ENCODE measurements at regions of chr22 and their contacts with region 1.

Region 1: DNA sequence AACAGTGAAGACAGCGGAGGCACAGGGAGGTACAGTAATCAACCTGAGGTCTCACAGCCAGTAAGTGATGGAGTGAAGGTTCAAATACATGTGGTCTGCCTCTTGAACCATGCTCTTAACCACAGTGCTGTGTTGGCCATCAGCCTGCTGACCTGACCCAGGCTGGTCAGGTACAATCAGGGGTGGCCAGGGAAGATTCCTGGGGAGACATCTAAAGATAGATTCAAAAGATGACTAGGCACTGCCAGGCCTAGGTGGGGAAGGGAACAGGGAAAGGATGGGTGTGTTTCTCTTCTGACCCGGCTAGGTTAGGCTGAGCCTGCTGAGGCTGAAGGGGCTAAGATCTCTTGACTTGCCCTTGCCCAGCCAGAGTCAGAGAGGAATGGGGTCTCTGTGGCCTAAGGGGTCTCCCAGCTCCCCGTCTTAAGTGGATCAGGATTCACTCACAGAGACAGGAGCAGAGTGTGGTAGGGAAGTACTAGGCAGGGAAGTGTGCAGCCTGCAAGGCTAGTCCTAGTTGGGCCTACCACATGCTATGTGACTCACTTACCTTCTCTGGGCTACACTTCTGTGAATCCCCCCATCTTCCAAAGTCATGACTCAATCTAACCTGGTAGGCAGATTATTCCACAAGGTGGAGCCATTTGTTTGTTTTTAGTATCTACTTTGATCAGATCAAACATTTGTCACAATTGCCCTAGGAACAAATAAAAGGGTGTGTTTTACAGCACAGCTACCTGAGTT is 10.4 kb upstream of the SREBF2 start:
- DNase-seq: peak; percentile 64
- H3K4me3 ChIP-seq: no peak overlapping the region
- H3K27ac ChIP-seq: peak overlapping the region; percentile 74
- H3K4me1 ChIP-seq: peaks cover 14% of the 10 kb centered on the region
- H3K27me3 ChIP-seq: no peaks in the 10 kb centered on the region
- CTCF ChIP-seq: peak; percentile 56

Region 2: DNA sequence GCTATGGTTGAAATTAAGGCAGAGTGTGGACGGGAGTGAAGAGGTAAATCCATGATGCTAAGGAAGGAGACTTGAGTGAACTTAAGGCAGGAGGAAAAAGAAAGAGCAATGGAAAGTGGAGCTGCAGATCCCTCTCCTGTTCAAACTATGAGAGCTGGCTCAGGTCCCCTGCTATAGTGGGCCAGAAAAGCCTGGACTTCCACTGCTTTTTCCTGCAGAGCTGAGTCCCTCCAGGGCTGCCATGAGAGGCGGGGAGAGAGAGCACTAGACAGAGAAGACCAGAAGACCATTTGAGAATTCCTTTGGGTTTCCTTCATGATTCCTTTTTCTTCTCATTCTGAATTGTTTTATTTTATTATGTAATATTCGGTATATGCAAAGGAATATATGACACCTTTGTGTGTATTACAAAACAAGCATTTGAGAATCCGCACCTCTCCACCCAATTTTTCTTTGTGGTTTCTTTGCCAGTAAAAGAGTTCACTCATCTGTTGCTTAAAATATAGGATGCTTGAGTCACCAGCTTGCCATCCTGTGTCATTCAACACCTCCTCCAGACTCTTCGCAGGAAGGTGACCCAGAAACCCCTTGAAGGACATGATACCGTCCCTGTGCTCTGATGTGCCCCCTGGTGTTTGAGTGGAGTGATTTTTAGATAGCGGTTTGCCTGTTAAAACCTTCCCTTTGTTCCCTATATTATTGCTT is 34.8 kb after region 1 on chr22:
- CTCF ChIA-PET with region 1: no interaction called
- POLR2A ChIA-PET with region 1: no interaction called
- intact Hi-C with region 1: loop called (anchors 1 kb)
- DNase-seq: peak; percentile 57
- H3K4me3 ChIP-seq: no peak overlapping the region
- H3K27ac ChIP-seq: peak overlapping the region; percentile 38
- H3K4me1 ChIP-seq: peaks cover 22% of the 10 kb centered on the region
- H3K27me3 ChIP-seq: no peaks in the 10 kb centered on the region
- CTCF ChIP-seq: peak; percentile 61

Region 3: GRCh38 chr22:41940832-41941765 is 118.6 kb after region 1 on chr22:
- CTCF ChIA-PET with region 1: interaction called, 6 read pairs
- POLR2A ChIA-PET with region 1: interaction called, 10 read pairs
- intact Hi-C with region 1: loop called (anchors 1 kb)
- DNase-seq: peak; percentile 87
- H3K4me3 ChIP-seq: no peak overlapping the region
- H3K27ac ChIP-seq: peak overlapping the region; percentile 57
- H3K4me1 ChIP-seq: peaks cover 5% of the 10 kb centered on the region
- H3K27me3 ChIP-seq: no peaks in the 10 kb centered on the region
- CTCF ChIP-seq: peak; percentile 85

Region 4: GRCh38 chr22:41946629-41947423 is 124.3 kb after region 1 on chr22 and contains the start of gene CENPM:
- CTCF ChIA-PET with region 1: no interaction called
- POLR2A ChIA-PET with region 1: interaction called, 10 read pairs
- intact Hi-C with region 1: no loop called
- DNase-seq: peak; percentile 98
- H3K4me3 ChIP-seq: peak within 1 kb of the TSS; percentile 68
- H3K27ac ChIP-seq: peak within 1 kb of the TSS; percentile 84
- H3K4me1 ChIP-seq: peaks cover 25% of the 10 kb centered on the region
- H3K27me3 ChIP-seq: no peaks in the 10 kb centered on the region
- CTCF ChIP-seq: no peak
- total RNA-seq, gene CENPM: 62.1 and 67.2 TPM in 2 replicates

Region 5: DNA sequence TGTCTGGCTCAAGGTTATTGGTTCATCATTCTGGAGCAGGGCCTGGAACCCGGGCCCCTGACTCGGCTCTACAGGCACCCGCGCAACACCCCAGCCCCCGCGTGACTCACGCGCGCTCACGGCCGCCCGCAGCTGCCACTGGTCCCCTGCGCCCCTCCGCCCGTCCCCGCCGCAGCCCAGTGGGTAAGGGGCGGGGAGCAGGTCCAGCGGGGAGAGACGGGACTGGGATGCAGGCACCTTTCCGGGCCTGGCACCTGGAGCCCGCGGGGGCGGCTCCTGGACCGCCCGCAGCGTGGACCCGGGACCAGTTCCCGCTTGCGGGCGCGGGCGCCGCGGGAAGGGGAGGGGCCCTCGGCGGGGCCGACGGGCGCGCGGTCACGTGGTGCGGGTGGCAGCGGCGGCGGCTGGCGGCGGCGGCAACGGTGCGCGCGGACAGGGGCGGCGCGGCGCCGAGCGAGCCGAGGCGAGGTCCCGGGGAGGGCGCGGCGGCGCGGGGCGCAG is 154.0 kb after region 1 on chr22:
- CTCF ChIA-PET with region 1: no interaction called
- POLR2A ChIA-PET with region 1: no interaction called
- intact Hi-C with region 1: no loop called
- DNase-seq: no peak
- H3K4me3 ChIP-seq: peak overlapping the region; percentile 52
- H3K27ac ChIP-seq: no peak overlapping the region
- H3K4me1 ChIP-seq: peaks cover 12% of the 10 kb centered on the region
- H3K27me3 ChIP-seq: peaks cover 29% of the 10 kb centered on the region
- CTCF ChIP-seq: no peak

Region 6: GRCh38 chr22:42114721-42115120 is 292.2 kb after region 1 on chr22:
- CTCF ChIA-PET with region 1: interaction called, 3 read pairs
- POLR2A ChIA-PET with region 1: no interaction called
- intact Hi-C with region 1: loop called (anchors 5 kb)
- DNase-seq: peak; percentile 50
- H3K4me3 ChIP-seq: no peak overlapping the region
- H3K27ac ChIP-seq: no peak overlapping the region
- H3K4me1 ChIP-seq: peaks cover 9% of the 10 kb centered on the region
- H3K27me3 ChIP-seq: no peaks in the 10 kb centered on the region
- CTCF ChIP-seq: peak; percentile 48

Region 7: GRCh38 chr22:42261296-42261695 is 438.8 kb after region 1 on chr22:
- CTCF ChIA-PET with region 1: no interaction called
- POLR2A ChIA-PET with region 1: no interaction called
- intact Hi-C with region 1: no loop called
- DNase-seq: no peak
- H3K4me3 ChIP-seq: no peak overlapping the region
- H3K27ac ChIP-seq: no peak overlapping the region
- H3K4me1 ChIP-seq: peaks cover 33% of the 10 kb centered on the region
- H3K27me3 ChIP-seq: no peaks in the 10 kb centered on the region
- CTCF ChIP-seq: no peak